ENCODE measurements at regions of chr3 and their contacts with region 1.

Region 1: DNA sequence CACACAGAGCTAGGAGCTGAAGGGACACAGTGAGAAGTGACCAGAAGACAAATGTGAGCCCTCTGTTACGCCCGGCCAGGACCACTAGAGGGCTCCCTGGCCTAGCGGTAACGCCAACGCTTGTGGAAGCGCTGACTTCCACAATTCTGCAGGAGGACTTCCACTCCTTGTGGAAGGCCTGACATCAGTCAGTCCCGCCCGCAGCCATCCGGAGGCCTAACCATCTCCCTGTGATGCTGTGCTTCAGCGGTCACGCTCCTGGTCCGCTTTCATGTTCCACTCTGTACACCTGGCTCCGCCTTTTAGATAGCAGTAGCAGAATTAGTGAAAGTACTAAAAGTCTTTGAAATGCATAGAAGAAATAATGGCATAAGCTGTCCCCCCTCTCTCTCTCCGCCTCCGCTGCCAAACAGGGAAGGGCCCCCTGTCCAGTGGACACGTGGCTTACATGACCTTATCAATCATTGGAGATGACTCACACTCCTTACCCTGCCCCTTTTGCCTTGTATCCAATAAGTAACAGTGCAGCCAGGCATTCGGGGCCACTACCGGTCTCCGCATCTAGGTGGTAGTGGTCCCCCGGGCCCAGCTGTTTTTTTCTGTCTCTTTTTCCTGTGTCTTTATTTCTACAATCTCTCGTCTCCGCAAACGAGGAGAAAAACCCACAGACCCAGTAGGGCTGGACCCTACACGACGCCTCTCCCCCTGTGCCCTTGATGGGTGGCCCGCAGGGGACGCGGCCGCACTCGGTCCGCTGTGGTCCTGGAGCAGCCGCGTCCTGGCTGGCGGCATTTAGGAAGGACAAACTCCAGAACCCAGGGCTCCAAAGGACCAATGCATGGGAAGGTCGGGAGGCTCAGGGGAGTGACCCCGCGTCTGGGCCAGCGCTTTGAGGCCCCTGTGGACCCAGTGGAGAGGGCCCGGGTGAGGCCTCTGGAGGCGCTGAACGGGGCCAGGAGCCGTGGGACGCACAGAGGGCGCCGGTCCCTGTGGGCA is 27.0 kb upstream of the RPL32 start:
- DNase-seq: peak; percentile 83 to 90
- H3K4me3 ChIP-seq: peak overlapping the region in 1 of 2 donors; percentile 7
- H3K27ac ChIP-seq: no peak overlapping the region
- H3K4me1 ChIP-seq: peaks cover 0 to 13% (median 6%) of the 10 kb centered on the region in 4 donors
- H3K27me3 ChIP-seq: peaks cover 0 to 10% of the 10 kb centered on the region in 2 donors
- CTCF ChIP-seq: peak; percentile 92 to 93

Region 2: GRCh38 chr3:12780751-12781150 is 87.6 kb before region 1 on chr3:
- intact Hi-C with region 1: no loop called
- DNase-seq: no peak
- H3K4me3 ChIP-seq: no peak overlapping the region
- H3K27ac ChIP-seq: no peak overlapping the region
- H3K4me1 ChIP-seq: peaks cover 0 to 4% (median 0%) of the 10 kb centered on the region in 4 donors
- H3K27me3 ChIP-seq: peaks cover 0 to 5% of the 10 kb centered on the region in 2 donors
- CTCF ChIP-seq: no peak

Region 3: DNA sequence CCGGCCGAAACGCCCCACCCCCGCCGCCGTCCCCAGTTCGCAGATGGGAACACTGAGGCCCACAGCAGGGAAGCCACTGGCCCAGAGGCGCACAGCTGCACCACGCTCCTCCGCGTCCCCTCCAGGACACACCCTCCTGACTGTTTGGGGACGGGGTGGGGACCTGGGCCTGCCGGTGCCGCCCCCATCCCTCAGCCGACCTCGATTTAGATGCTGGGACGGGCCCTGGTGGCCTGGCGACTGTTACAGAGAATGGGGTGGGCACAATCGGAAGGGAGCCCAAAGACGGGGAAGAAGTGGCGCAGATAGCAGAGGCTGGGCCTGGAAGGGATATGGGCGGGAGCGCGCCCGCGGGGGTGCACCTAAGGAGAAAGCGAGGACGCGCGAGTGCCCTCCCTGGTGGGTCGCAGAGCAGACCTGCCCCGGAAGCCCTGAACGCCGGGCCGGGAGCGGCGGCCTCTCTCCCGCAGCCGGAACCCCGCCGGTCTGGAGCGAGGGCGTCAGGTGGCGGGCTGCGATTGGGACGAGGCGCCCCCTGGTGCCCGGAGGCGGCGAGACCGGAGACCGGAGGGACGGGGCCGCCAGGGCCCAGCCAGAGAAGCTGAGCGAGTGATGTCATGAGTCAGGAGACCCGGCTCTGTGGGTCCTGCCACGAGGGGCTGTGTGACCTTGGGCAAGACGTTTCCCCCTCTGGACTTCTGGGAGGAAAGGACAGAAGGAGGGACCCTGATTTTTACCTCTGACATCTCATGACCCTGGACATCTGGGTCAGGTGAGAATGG is 126.5 kb after region 1 on chr3:
- intact Hi-C with region 1: loop called (anchors 5 kb)
- DNase-seq: peak; percentile 86 to 94
- H3K4me3 ChIP-seq: peak overlapping the region; percentile 62 to 76
- H3K27ac ChIP-seq: peak overlapping the region; percentile 90 to 95
- H3K4me1 ChIP-seq: peaks cover 0 to 25% (median 17%) of the 10 kb centered on the region in 4 donors
- H3K27me3 ChIP-seq: no peaks in the 10 kb centered on the region
- CTCF ChIP-seq: peak; percentile 93 to 96